ENCODE measurements at regions of chr15 and their contacts with region 1.

Region 1: DNA sequence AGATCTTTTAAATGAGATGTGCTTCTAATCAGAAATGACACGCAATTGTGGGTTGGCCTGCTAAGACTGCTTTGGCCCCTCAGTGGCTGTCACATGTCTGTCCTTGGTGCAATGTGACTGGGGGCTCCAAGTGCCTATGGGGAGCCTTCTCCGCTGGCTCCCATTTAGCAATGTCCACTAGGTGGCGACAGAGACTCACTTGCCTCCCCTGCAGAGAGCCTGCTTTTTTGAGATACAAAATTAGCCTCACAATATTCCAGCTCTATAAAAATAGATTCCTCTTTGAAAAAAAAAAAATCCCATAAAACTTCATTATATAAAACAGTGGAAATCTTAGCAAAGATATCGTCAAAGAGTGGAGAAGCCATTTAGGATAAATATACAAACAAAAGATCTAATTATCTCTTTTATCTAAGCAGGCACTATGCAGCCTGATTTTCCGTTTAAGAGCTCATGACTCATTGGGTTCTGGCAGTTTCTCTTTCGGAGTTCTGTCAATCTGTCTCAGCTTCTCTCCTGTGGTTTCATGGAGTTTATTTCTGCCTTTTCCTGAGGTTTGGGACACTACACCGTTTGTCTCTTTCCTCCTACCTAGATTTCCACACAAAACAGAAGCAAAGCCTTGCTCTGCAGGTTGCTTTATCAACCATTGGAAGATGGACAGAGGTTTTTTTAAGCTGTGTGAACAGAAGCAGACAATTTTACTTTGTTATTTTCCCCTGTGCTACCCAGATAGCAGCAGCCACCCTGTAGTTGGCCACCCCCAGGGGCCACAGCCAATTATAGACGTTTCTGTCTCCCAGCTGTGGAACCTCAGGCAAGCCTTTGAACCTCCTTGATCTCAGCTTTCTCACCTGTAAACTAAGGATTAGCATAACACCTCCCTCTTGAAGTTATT is 68.4 kb upstream of the TNFAIP8L3 start:
- DNase-seq: peak; percentile 85
- CTCF ChIP-seq: peak; percentile 94

Region 2: GRCh38 chr15:51132384-51133139 is 30.6 kb before region 1 on chr15:
- CTCF ChIA-PET with region 1: interaction called, 12 read pairs
- POLR2A ChIA-PET with region 1: no interaction called
- DNase-seq: no peak
- CTCF ChIP-seq: peak; percentile 71

Region 3: GRCh38 chr15:51185213-51186159 is 22.4 kb after region 1 on chr15:
- CTCF ChIA-PET with region 1: interaction called, 78 read pairs
- POLR2A ChIA-PET with region 1: no interaction called
- DNase-seq: no peak
- CTCF ChIP-seq: no peak

Region 4: GRCh38 chr15:51198701-51199232 is 35.7 kb after region 1 on chr15:
- CTCF ChIA-PET with region 1: interaction called, 71 read pairs
- POLR2A ChIA-PET with region 1: no interaction called
- DNase-seq: no peak
- CTCF ChIP-seq: no peak

Region 5: GRCh38 chr15:51281368-51281967 is 118.4 kb after region 1 on chr15:
- CTCF ChIA-PET with region 1: interaction called, 32 read pairs
- POLR2A ChIA-PET with region 1: no interaction called
- DNase-seq: peak; percentile 69
- CTCF ChIP-seq: peak; percentile 82

Region 6: DNA sequence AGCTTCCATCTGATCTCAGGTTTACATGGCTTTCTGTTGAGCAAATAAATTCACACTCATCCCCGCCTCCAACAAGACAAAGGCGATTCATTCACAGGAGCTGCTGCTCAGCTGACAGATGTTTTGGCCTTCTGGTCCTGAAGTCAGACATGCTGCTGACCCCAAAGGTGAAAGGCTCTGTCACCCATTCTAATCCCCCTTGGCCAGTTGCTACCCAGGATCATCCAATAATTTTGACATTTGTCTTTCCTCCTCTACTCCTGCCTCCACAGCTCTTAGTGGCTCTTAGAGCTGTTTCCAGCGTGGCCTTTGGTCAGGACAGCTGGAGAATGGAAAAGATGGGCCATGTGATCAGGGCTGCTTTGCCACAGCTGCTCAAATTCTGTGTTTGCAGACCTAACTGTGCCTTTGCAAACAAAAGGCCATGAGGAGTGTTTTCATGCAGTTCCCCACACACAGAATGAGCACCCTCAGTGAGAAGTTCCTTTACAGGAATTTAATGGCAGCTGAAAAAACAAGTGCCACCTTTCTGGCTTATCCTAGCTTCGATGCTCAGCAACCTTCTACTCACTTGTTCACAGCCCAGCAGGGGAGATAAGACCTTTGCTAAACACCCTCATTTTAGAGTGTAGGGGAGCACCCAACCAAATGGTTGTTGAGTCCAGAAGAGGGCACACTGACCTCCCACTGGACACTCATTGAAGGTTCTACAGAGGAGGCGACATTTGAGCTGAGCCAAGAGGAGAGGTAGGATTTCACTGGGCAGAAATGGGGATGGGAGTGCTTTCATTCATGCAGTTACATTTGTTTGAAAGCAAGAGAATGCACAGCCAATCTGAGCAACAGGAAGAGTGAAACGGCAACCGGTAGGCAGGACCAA is 136.3 kb after region 1 on chr15:
- CTCF ChIA-PET with region 1: interaction called, 12 read pairs
- POLR2A ChIA-PET with region 1: no interaction called
- DNase-seq: no peak
- CTCF ChIP-seq: no peak

Measured in GM10248 (cell line).